Mucosa of descending colon (tissue), 3 donors: ENCODE measurements at regions of chr2 and their contacts with region 1.

Region 1: GRCh38 chr2:191171708-191172355 is 21.0 kb upstream of the STAT4 start:
- DNase-seq: no peak
- ATAC-seq: no peak
- H3K4me3 ChIP-seq: no peak overlapping the region
- H3K4me1 ChIP-seq: peaks cover 13% of the 10 kb centered on the region
- CTCF ChIP-seq: no peak

Region 2: DNA sequence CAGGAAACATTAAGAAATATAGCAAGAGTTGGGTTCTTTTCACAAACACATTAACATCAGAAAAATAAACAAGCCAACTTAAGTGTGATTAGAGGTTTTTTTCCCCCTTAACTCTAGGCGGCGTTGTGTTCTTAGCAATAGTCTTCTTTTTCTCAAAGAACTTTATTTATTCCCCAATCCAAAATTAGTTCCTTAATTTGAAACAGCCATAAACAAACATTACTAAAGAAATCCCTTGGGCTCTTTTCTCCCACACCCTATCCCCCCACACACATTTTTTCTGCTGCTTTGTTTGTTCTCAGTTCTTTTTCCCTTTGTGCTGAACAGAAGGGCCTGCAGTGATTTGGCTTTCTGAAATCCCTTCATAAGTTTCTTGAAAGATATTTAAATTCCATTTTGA is 60.2 kb after region 1 on chr2:
- intact Hi-C with region 1: no loop called
- DNase-seq: no peak
- ATAC-seq: no peak
- H3K4me3 ChIP-seq: no peak overlapping the region
- H3K4me1 ChIP-seq: no peaks in the 10 kb centered on the region
- CTCF ChIP-seq: no peak

Region 3: DNA sequence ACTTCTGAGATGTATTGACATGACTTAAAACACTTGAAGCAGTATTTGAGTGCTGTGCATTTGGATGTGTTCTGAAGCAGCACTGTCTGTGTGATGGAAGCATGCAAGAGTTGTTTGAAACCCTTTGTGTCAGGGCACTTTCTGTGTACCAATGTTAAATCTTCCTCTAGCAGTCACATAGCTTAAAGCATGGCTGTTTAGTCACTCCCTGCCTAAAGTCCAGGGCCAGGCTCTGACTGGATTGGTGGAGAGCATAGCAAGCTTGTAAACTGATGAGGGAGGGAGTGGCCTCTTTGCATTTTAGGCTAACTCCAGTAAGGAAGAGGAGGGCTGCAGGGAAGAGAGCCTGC is 146.9 kb after region 1 on chr2:
- intact Hi-C with region 1: loop called in 1 of 2 experiments (anchors 10 kb)
- DNase-seq: peak; percentile 67 to 85 (median 68)
- ATAC-seq: peak; percentile 98
- H3K4me3 ChIP-seq: no peak overlapping the region
- H3K4me1 ChIP-seq: peaks cover 11% of the 10 kb centered on the region
- CTCF ChIP-seq: no peak